ENCODE measurements at regions of chr12 and their contacts with region 1.

Region 1: GRCh38 chr12:49331380-49332222 is 5.4 kb downstream of the C1QL4 start:
- DNase-seq: peak; percentile 75
- H3K4me3 ChIP-seq: no peak overlapping the region
- H3K27ac ChIP-seq: no peak overlapping the region
- H3K4me1 ChIP-seq: no peaks in the 10 kb centered on the region
- H3K27me3 ChIP-seq: peaks cover 33% of the 10 kb centered on the region in 2 experiments
- CTCF ChIP-seq: peak; percentile 81 to 86
- POLR2A ChIP-seq: no peak

Region 2: DNA sequence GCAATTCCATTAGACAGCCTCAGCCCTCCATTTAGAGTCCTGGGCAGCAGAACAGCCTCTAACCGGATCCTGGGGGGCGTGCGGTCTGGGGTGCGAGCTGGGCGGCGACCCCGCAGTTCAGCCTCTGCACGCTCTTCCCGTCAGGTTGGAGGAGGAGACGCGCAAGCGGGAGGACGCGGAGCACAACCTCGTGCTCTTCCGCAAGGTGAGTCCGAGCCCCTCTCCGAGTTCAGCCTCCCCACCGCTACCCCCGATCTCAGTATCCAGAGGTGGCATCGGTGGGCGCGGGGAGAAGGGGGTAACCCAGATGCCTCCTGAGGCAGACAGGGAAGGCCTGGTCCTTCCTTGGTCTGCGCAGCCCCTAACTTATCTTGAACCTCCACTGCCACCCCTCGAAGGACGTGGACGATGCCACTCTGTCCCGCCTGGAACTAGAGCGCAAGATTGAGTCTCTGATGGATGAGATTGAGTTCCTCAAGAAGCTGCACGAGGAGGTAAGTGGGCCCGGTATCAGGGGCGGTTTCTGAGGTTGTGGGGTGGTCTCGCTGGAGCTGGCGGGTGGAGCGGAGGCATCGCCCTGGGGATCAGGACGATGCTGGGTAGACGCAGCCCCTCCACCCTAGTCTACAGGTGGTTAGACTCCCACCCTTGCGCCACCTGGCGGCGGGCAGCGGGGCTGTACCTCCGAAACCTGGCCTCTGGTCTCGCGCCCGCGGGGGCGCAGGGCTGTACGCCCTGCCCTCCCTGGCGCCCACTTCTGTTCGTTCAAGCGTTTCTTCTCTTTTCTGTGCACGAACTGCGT is 35.4 kb before region 1 on chr12:
- CTCF ChIA-PET with region 1: interaction called, 13 read pairs
- POLR2A ChIA-PET with region 1: no interaction called
- dilution Hi-C with region 1: no loop called
- intact Hi-C with region 1: no loop called
- DNase-seq: no peak
- H3K4me3 ChIP-seq: no peak overlapping the region
- H3K27ac ChIP-seq: no peak overlapping the region
- H3K4me1 ChIP-seq: peaks cover 3% of the 10 kb centered on the region
- H3K27me3 ChIP-seq: peaks cover 32 to 42% of the 10 kb centered on the region in 2 experiments
- CTCF ChIP-seq: peak; percentile 73 to 82
- POLR2A ChIP-seq: no peak

Region 3: GRCh38 chr12:49342066-49342913 is 10.7 kb after region 1 on chr12:
- CTCF ChIA-PET with region 1: interaction called, 280 read pairs
- POLR2A ChIA-PET with region 1: no interaction called
- dilution Hi-C with region 1: no loop called
- intact Hi-C with region 1: loop called (anchors 1 kb)
- DNase-seq: peak; percentile 76
- H3K4me3 ChIP-seq: peak overlapping the region in 2 of 3 experiments; percentile 24 to 25
- H3K27ac ChIP-seq: no peak overlapping the region
- H3K4me1 ChIP-seq: peaks cover 31% of the 10 kb centered on the region
- H3K27me3 ChIP-seq: peaks cover 50 to 71% of the 10 kb centered on the region in 2 experiments
- CTCF ChIP-seq: peak; percentile 92 to 94
- POLR2A ChIP-seq: no peak

Region 4: GRCh38 chr12:49470986-49471385 is 139.4 kb after region 1 on chr12:
- CTCF ChIA-PET with region 1: no interaction called
- POLR2A ChIA-PET with region 1: interaction called, 10 read pairs
- dilution Hi-C with region 1: no loop called
- intact Hi-C with region 1: no loop called
- DNase-seq: no peak
- H3K4me3 ChIP-seq: no peak overlapping the region
- H3K27ac ChIP-seq: no peak overlapping the region
- H3K4me1 ChIP-seq: no peaks in the 10 kb centered on the region
- H3K27me3 ChIP-seq: no peaks in the 10 kb centered on the region
- CTCF ChIP-seq: no peak
- POLR2A ChIP-seq: no peak

Region 5: GRCh38 chr12:49553512-49554088 is 222.0 kb after region 1 on chr12:
- CTCF ChIA-PET with region 1: interaction called, 15 read pairs
- POLR2A ChIA-PET with region 1: no interaction called
- dilution Hi-C with region 1: no loop called
- intact Hi-C with region 1: no loop called
- DNase-seq: peak; percentile 44
- H3K4me3 ChIP-seq: no peak overlapping the region
- H3K27ac ChIP-seq: no peak overlapping the region
- H3K4me1 ChIP-seq: peaks cover 6% of the 10 kb centered on the region
- H3K27me3 ChIP-seq: peaks cover 0 to 2% of the 10 kb centered on the region in 2 experiments
- CTCF ChIP-seq: peak; percentile 30 to 34
- POLR2A ChIP-seq: no peak

Region 6: GRCh38 chr12:49580572-49581535 is 249.3 kb after region 1 on chr12:
- CTCF ChIA-PET with region 1: interaction called, 100 read pairs
- POLR2A ChIA-PET with region 1: no interaction called
- dilution Hi-C with region 1: no loop called
- intact Hi-C with region 1: loop called (anchors 1 kb)
- DNase-seq: peak; percentile 65
- H3K4me3 ChIP-seq: no peak overlapping the region
- H3K27ac ChIP-seq: no peak overlapping the region
- H3K4me1 ChIP-seq: no peaks in the 10 kb centered on the region
- H3K27me3 ChIP-seq: no peaks in the 10 kb centered on the region
- CTCF ChIP-seq: peak; percentile 89 to 90
- POLR2A ChIP-seq: no peak

Measured in endothelial cell of umbilical vein (primary cell).